Activated T-helper 2 cell treated with anti-CD3 and anti-CD28 coated beads, Interferon-gamma antibody, Interleukin-2, Interleukin-4, amounts not matched to agents 10 μg/mL and 5 μg/mL and 100 μg/mL, durations not matched to agents 14 hours and 24 hours and 36 hours (primary cell): ENCODE measurements at regions of chr13 and their contacts with region 1.

Region 1: DNA sequence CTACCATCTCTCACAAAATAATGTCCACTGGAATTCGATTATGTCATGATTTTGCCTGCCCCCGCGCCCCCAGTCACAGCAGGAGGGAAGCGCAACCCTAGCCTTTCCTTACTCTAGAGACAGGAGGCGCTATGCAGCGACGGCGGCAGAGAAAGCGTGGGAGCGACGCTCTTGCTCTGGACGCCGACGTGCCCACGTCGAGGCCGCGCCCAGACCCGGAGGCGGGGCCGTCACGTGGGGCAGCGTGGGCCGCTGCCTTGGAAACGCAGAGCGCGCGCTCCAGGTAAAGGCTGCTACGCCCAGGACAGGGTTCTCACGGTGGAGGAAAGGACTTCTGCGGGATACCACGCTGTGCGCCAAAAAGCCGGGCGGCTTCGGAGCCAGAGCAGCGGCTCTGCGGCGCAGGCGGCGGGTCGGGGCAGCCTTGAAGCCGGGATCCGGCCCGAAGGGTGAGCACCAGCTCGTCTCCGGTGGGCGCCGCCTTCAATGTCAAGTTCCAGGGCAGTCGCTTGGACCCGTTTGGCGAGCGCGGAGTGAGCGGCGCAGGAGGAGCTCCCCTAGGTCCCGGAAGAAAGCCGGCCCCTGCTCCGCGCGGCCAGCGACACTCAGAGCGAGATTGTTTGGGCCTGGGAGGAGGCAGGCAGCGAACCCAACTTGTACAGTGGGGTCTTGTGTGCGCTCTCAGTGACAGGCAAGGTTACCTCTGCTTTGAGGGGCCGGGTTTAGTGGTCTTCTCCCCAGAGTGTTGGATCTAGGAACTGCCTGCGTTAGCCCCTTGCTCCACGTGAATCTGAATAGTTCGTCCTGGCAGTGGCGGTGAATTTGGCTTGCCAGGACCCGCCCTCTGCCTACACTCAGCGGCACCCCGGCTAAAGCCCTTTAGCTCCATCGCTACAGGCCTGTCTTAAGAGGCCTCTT is 121.7 kb downstream of the MRPL57 start:
- DNase-seq: peak; percentile 83
- H3K4me3 Mint-ChIP-seq: peak overlapping the region; percentile 91
- H3K27ac Mint-ChIP-seq: peak overlapping the region; percentile 87
- H3K4me1 Mint-ChIP-seq: peaks cover 21% of the 10 kb centered on the region
- H3K27me3 Mint-ChIP-seq: peaks cover 3% of the 10 kb centered on the region

Region 2: GRCh38 chr13:21115231-21115630 is 182.9 kb before region 1 on chr13:
- intact Hi-C with region 1: loop called (anchors 10 kb)
- DNase-seq: no peak
- H3K4me3 Mint-ChIP-seq: no peak overlapping the region
- H3K27ac Mint-ChIP-seq: no peak overlapping the region
- H3K4me1 Mint-ChIP-seq: no peaks in the 10 kb centered on the region
- H3K27me3 Mint-ChIP-seq: no peaks in the 10 kb centered on the region

Region 3: GRCh38 chr13:21328836-21329477 is 30.8 kb after region 1 on chr13:
- intact Hi-C with region 1: loop called (anchors 2 kb)
- DNase-seq: no peak
- H3K4me3 Mint-ChIP-seq: peak overlapping the region; percentile 22
- H3K27ac Mint-ChIP-seq: peak overlapping the region; percentile 29
- H3K4me1 Mint-ChIP-seq: peaks cover 48% of the 10 kb centered on the region
- H3K27me3 Mint-ChIP-seq: no peaks in the 10 kb centered on the region

Region 4: GRCh38 chr13:21458813-21459701 is 160.9 kb after region 1 on chr13 and contains the start of gene ZDHHC20:
- intact Hi-C with region 1: loop called (anchors 1 kb)
- DNase-seq: peak; percentile 85
- H3K4me3 Mint-ChIP-seq: peak within 1 kb of the TSS; percentile 92
- H3K27ac Mint-ChIP-seq: peak within 1 kb of the TSS; percentile 90
- H3K4me1 Mint-ChIP-seq: peaks cover 27% of the 10 kb centered on the region
- H3K27me3 Mint-ChIP-seq: no peaks in the 10 kb centered on the region
- total RNA-seq, gene ZDHHC20: 59.0 and 63.3 TPM in 2 replicates

Region 5: GRCh38 chr13:21603531-21604448 is 305.6 kb after region 1 on chr13 and contains the start of gene MICU2:
- intact Hi-C with region 1: loop called (anchors 5 kb)
- DNase-seq: peak; percentile 94
- H3K4me3 Mint-ChIP-seq: peak within 1 kb of the TSS; percentile 81
- H3K27ac Mint-ChIP-seq: peak within 1 kb of the TSS; percentile 85
- H3K4me1 Mint-ChIP-seq: peaks cover 22% of the 10 kb centered on the region
- H3K27me3 Mint-ChIP-seq: peaks cover 11% of the 10 kb centered on the region
- total RNA-seq, gene MICU2: 36.6 and 38.8 TPM in 2 replicates